ENCODE measurements at regions of chr7 and their contacts with region 1.

Region 1: GRCh38 chr7:73446682-73447081 is 13.1 kb downstream of the FZD9 start:
- DNase-seq: no peak
- ATAC-seq: no peak
- H3K4me3 ChIP-seq: no peak overlapping the region
- H3K27ac ChIP-seq: no peak overlapping the region
- H3K4me1 ChIP-seq: peaks cover 0 to 10% (median 0%) of the 10 kb centered on the region in 9 donors
- H3K27me3 ChIP-seq: no peaks in the 10 kb centered on the region
- CTCF ChIP-seq: no peak

Region 2: DNA sequence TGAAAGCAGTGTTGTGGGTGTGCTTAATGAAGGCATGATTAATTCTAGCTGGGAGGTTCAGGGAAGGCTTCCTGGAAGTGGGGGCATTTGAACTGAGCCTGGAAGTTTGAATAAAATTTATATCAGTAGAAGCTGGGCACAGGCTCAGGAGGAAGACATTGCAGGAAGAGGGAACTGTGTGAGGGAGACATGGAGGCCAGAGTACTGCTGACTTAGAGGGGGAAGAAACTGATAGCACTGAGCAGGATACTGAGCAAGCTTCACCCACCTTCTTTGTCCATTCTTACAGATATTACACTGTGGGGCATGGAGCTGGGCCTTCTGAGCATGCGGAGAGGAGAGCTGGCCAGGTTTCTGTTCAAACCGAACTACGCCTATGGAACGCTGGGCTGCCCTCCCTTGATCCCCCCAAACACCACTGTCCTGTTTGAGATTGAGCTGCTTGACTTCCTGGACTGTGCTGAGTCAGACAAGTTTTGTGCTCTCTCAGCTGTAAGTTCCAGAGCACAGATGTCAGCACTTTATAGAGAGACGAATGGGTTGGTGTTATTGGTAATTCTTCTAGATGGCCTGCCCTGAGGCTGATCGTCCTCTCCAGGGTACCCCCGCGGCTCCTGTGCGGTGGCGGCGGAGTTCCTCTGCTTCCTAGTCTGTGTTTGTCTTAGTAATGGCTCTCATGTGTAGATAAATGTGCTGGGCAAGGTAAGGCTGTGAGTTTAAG is 116.7 kb before region 1 on chr7:
- intact Hi-C with region 1: loop called in 1 of 10 experiments (anchors 10 kb)
- DNase-seq: no peak
- ATAC-seq: peak in 6 of 8 donors; percentile 53 to 75 (median 69)
- H3K4me3 ChIP-seq: no peak overlapping the region
- H3K27ac ChIP-seq: peak overlapping the region in 1 of 10 donors; percentile 63
- H3K4me1 ChIP-seq: peaks cover 0 to 10% (median 0%) of the 10 kb centered on the region in 9 donors
- H3K27me3 ChIP-seq: no peaks in the 10 kb centered on the region
- CTCF ChIP-seq: no peak

Measured in heart right ventricle (tissue), 16 donors.